ENCODE measurements at regions of chr5 and their contacts with region 1.

Region 1: DNA sequence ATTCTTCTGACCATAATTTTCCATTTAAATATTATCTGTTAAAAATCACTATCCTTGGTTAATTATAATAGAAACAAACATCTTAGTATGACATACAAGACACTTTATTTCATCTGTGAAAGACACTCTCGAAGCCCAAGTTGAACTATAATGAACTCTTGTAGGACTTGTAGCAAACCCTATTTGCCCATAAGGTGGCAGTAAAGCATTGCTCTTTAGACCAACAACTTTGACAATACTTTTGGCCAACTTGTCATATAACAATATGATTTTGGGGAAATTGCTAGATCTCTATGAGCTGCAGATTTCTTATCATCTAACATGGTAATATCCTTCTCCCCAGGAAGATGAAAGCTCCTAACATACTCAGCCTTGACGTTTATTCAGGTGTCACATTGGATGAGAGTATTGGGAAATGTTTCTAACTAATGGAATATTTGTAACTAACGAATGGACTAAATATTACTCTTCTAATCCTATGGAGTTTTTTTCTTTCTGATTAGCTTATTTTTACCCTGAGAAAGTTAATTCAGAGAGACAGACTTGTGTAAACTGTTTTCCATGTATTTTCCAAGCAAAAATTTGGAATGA is 11.0 kb downstream of the SPINK14 start:
- DNase-seq: no peak
- ATAC-seq: no peak
- H3K4me3 Mint-ChIP-seq: no peak overlapping the region
- H3K27ac Mint-ChIP-seq: no peak overlapping the region
- H3K4me1 Mint-ChIP-seq: no peaks in the 10 kb centered on the region
- H3K27me3 Mint-ChIP-seq: peaks cover 3% of the 10 kb centered on the region
- CTCF ChIP-seq: no peak

Region 2: GRCh38 chr5:148343046-148343408 is 163.7 kb after region 1 on chr5:
- CTCF ChIA-PET with region 1: no interaction called
- POLR2A ChIA-PET with region 1: no interaction called
- intact Hi-C with region 1: no loop called
- DNase-seq: no peak
- ATAC-seq: no peak
- H3K4me3 Mint-ChIP-seq: no peak overlapping the region
- H3K27ac Mint-ChIP-seq: no peak overlapping the region
- H3K4me1 Mint-ChIP-seq: no peaks in the 10 kb centered on the region
- H3K27me3 Mint-ChIP-seq: no peaks in the 10 kb centered on the region
- CTCF ChIP-seq: no peak

Region 3: DNA sequence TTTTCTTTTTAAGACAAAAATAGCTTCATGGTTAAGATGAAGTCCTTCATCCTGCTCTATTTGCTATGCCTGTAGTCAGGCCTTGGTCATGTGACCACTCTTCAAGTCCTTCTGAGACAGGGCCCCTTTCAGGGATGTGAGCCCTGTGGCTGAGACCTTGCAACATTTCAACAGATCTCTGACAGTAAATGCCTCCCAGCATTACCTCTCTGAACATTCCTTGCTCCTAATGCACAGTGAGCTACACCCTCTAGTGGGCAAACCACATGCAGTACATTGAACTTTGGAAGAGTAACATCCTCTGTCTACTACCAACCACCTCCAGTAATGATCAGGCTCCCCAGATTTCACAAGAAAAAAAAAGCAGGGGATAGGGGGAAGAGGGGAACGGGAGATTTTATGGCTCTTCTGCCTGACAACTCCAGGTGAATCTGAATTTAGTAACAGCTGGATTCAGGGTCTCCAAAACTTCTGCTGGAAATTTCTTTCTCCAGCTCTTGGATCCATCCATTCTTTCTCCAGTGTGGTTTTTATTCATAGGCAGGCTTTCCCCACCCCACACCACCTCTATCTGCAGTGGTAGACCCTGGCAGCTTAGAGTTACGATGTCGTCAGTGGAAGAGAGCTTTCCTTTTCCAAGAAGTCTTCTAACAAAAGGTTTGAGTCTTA is 195.5 kb after region 1 on chr5:
- CTCF ChIA-PET with region 1: no interaction called
- POLR2A ChIA-PET with region 1: no interaction called
- intact Hi-C with region 1: loop called (anchors 2 kb)
- DNase-seq: no peak
- ATAC-seq: peak; percentile 21
- H3K4me3 Mint-ChIP-seq: no peak overlapping the region
- H3K27ac Mint-ChIP-seq: no peak overlapping the region
- H3K4me1 Mint-ChIP-seq: no peaks in the 10 kb centered on the region
- H3K27me3 Mint-ChIP-seq: no peaks in the 10 kb centered on the region
- CTCF ChIP-seq: no peak

Region 4: DNA sequence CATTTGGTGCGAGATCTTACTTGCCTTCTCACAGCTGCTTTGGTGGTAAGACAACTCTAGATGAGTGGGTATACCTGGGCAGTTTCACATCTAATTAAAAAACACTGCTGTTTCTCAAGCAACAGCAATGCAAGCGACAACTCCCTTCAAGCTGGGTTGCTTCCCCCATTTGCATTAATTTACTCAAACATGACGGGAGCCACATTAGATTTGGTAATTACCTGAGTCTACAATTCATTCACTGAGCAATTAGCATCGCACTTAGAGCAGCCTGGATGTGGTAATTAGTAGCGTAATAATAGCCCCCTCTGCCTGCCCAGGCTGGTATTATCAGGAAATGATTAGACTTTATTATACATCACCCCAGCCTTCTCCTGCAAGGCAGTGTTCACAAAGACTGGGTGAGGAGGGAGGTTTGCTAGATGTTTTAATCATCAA is 277.9 kb after region 1 on chr5:
- CTCF ChIA-PET with region 1: no interaction called
- POLR2A ChIA-PET with region 1: no interaction called
- intact Hi-C with region 1: loop called (anchors 1 kb)
- DNase-seq: no peak
- ATAC-seq: peak; percentile 64
- H3K4me3 Mint-ChIP-seq: no peak overlapping the region
- H3K27ac Mint-ChIP-seq: no peak overlapping the region
- H3K4me1 Mint-ChIP-seq: peaks cover 2% of the 10 kb centered on the region
- H3K27me3 Mint-ChIP-seq: peaks cover 22% of the 10 kb centered on the region
- CTCF ChIP-seq: no peak

Region 5: DNA sequence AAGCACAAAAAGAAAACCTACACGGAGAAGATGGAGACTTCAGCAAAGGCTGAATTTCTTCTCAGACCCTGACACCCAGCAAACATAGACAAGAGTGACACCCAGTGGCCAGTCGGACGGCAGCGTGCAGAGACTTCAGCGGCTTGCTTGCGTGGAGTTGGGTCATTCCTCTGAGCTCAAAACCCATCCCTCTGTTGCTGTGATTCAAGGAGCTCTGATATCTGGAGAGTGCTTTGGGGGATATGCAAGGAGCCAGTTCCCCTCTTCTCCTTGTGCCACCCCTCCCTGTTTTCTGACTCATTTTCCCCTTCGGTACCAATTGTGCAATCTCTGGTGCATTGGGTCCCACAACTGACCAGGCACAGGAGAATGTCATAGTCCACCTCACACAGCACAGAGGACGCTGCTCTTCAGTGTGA is 856.1 kb after region 1 on chr5:
- CTCF ChIA-PET with region 1: no interaction called
- POLR2A ChIA-PET with region 1: no interaction called
- intact Hi-C with region 1: loop called (anchors 1 kb)
- DNase-seq: peak; percentile 30
- ATAC-seq: peak; percentile 79
- H3K4me3 Mint-ChIP-seq: no peak overlapping the region
- H3K27ac Mint-ChIP-seq: no peak overlapping the region
- H3K4me1 Mint-ChIP-seq: no peaks in the 10 kb centered on the region
- H3K27me3 Mint-ChIP-seq: peaks cover 16% of the 10 kb centered on the region
- CTCF ChIP-seq: no peak

Region 6: DNA sequence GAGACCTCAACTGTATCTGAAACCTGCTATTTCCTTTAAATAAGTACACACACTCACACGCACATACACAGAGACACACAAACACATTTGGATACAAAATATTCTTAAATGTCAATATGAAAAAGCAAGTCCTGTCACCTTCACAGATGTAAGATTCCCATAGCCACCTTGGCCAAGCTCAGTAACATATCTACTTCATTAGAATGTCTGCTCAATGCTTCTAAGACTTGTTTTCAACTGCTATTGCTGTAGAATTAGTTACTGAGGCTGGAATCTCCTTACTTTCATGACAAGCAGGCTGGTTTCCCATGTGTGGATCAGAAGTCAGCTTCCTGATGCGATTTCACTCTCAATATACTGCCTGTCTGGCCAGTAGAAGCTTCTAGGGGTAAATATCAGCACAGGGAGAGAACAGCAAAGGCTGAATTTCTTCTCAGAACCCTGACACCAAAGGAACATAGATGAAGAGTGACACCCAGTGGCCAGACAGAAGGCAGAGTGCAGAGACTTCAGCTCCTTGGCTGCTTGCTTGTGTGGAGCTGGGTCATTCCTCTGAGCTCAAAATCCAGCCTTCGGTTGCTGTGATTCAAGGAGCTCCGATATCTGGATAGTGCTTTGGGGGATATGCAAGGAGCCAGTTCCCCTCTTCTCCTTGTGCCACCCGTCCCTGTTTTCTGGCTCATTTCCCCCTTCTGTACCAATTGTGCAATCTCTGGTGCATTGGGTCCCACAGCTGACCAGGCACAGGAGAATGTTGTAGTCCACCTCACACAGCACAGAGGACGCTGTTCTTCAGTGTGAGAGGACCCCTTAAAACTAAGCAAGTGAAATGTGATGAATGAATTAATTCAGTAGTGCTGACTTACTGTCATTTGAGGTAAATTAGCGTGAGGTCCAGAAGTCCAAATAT is 935.3 kb after region 1 on chr5:
- CTCF ChIA-PET with region 1: no interaction called
- POLR2A ChIA-PET with region 1: no interaction called
- intact Hi-C with region 1: loop called (anchors 2 kb)
- DNase-seq: no peak
- ATAC-seq: peak; percentile 45
- H3K4me3 Mint-ChIP-seq: no peak overlapping the region
- H3K27ac Mint-ChIP-seq: no peak overlapping the region
- H3K4me1 Mint-ChIP-seq: no peaks in the 10 kb centered on the region
- H3K27me3 Mint-ChIP-seq: peaks cover 23% of the 10 kb centered on the region
- CTCF ChIP-seq: no peak

Region 7: GRCh38 chr5:149567226-149567625 is 1387.9 kb after region 1 on chr5:
- CTCF ChIA-PET with region 1: no interaction called
- POLR2A ChIA-PET with region 1: no interaction called
- intact Hi-C with region 1: loop called (anchors 5 kb)
- DNase-seq: no peak
- ATAC-seq: no peak
- H3K4me3 Mint-ChIP-seq: no peak overlapping the region
- H3K27ac Mint-ChIP-seq: no peak overlapping the region
- H3K4me1 Mint-ChIP-seq: no peaks in the 10 kb centered on the region
- H3K27me3 Mint-ChIP-seq: no peaks in the 10 kb centered on the region
- CTCF ChIP-seq: no peak

Measured in activated B cell treated with CpG ODN at 0.5 μM for 24 hours (primary cell).